ENCODE measurements at regions of chr15 and their contacts with region 1.

Region 1: DNA sequence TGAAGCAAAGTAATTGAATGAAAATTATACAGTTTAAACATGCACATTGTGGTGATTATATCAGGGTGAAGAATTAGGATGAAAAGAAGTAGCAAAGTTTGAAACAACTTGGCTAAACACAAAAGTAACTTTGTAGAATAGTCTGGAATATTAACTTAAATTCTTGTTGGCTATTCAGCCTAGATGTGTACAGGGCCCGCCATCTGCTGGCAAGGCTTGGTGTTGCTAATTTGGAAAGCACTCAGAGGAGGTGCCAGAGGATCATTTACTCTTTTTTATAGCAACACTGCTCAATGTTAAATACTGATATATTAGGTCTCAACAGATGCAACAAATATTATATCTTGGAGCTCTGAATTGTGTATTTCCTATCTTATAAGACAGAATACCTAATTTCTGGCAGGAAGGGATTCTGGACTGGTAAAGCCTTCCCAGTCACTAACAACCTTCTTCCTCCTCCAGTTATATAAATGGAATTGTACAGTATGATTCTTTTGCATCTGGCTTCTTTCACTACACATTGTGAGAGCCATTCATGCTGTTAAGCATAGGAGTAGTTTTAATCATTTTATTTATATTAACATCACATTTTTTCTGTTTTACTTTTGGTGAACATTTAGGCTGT is 36.1 kb downstream of the TTC23 start:
- DNase-seq: peak; percentile 64
- H3K4me3 Mint-ChIP-seq: no peak overlapping the region
- H3K27ac Mint-ChIP-seq: no peak overlapping the region
- H3K4me1 Mint-ChIP-seq: peaks cover 6% of the 10 kb centered on the region
- H3K27me3 Mint-ChIP-seq: no peaks in the 10 kb centered on the region
- CTCF ChIP-seq: peak; percentile 85

Region 2: DNA sequence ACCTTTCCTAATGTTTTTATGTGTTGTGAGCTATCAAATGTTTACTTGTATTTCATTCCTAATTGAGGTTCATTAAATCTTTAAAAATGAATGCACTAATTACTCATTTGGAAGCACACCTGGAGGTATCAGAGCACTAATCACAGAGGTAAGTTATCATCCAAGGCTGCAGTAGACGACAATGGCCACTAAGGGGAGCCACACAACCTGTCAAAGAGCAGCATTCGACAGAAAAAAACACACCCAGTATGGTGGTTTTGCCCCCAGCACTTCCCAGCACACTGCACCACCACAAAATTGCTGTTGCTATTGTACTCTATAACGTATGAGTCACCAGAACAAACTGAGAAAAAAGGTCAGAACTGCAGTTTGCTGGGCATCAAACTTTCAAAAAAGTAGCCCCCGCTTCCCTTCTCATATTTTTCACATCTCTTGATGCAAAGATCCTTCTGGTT is 770.9 kb before region 1 on chr15:
- CTCF ChIA-PET with region 1: interaction called, 4 read pairs
- POLR2A ChIA-PET with region 1: no interaction called
- intact Hi-C with region 1: loop called (anchors 1 kb)
- DNase-seq: peak; percentile 89
- H3K4me3 Mint-ChIP-seq: no peak overlapping the region
- H3K27ac Mint-ChIP-seq: no peak overlapping the region
- H3K4me1 Mint-ChIP-seq: peaks cover 9% of the 10 kb centered on the region
- H3K27me3 Mint-ChIP-seq: peaks cover 22% of the 10 kb centered on the region
- CTCF ChIP-seq: peak; percentile 89

Region 3: GRCh38 chr15:98873441-98874201 is 339.7 kb before region 1 on chr15:
- CTCF ChIA-PET with region 1: no interaction called
- POLR2A ChIA-PET with region 1: no interaction called
- intact Hi-C with region 1: no loop called
- DNase-seq: peak; percentile 97
- H3K4me3 Mint-ChIP-seq: peak overlapping the region; percentile 69
- H3K27ac Mint-ChIP-seq: peak overlapping the region; percentile 80
- H3K4me1 Mint-ChIP-seq: peaks cover 47% of the 10 kb centered on the region
- H3K27me3 Mint-ChIP-seq: no peaks in the 10 kb centered on the region
- CTCF ChIP-seq: no peak

Region 4: DNA sequence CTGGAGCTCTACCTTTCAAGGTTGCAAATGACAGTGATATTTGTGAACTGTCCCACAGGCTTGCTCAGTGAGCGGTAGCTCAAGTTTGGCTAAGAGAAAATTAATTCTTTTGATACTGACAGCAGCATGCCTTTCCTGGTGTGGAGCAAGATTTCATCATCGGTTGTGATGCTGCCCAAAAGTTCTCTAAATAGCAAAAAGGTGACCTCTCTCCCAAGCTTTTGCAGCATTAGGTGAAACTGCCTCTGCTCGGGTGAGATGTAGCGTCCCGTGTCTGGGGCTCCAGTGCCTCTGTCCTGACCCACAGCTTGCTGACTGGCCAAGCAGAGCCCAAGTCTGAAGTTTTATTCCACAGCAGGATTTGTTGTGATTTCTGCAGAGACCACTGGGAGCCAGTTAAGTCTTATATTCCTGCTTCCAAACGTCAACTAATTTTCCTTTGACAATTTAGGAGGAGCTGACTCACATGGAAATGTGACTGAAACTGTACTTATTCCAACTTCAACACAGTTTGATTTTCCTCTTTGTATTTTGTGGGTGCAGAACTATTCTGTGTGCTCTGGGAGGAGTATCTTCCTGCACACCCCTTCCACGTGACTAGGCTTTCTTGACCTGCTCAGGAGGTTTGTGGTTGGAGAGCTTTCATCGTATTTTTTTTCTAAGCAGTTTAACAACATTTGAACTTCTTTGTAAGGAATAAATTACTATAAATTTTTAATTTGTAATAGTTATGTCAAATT is 102.5 kb before region 1 on chr15:
- CTCF ChIA-PET with region 1: interaction called, 11 read pairs
- POLR2A ChIA-PET with region 1: no interaction called
- intact Hi-C with region 1: no loop called
- DNase-seq: no peak
- H3K4me3 Mint-ChIP-seq: no peak overlapping the region
- H3K27ac Mint-ChIP-seq: peak overlapping the region; percentile 40
- H3K4me1 Mint-ChIP-seq: peaks cover 6% of the 10 kb centered on the region
- H3K27me3 Mint-ChIP-seq: no peaks in the 10 kb centered on the region
- CTCF ChIP-seq: no peak

Region 5: DNA sequence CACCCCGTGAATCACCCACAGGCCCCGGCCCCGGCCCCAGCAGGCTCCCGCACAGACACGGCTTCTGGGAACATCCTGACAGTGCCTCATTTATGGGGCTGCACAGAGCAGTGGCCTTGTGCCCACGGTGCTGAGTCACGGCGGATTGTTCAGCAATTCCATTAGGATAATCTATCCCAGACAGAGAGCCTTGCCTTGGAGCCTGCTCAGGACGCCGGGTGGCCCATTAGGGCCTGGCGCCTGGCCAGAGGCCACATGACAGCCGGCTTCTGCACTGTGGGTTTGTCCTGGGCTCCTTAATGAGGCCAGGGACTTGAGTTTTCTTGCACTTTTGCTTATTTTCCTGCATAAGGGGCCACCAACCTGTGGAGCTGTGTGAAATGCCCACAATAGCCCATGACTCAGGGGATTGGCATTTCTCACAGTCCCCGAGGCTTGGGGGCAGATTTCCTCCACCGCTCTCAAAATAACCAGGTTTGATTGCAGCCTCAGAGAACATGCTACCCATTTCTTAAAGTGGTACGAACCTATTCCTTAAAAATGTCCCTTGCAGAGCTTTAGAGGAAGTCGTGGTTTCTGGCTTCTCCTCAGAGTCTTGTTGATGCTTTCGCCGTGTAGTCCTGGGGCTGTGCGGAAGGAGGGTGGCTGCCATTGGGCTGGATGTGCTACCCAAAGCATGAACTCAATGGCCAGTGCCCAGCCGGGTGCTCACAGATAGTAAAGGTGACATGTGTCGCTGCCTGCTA is 89.4 kb before region 1 on chr15:
- CTCF ChIA-PET with region 1: interaction called, 6 read pairs
- POLR2A ChIA-PET with region 1: no interaction called
- intact Hi-C with region 1: loop called (anchors 5 kb)
- DNase-seq: peak; percentile 95
- H3K4me3 Mint-ChIP-seq: peak overlapping the region; percentile 68
- H3K27ac Mint-ChIP-seq: peak overlapping the region; percentile 70
- H3K4me1 Mint-ChIP-seq: peaks cover 19% of the 10 kb centered on the region
- H3K27me3 Mint-ChIP-seq: no peaks in the 10 kb centered on the region
- CTCF ChIP-seq: no peak

Region 6: DNA sequence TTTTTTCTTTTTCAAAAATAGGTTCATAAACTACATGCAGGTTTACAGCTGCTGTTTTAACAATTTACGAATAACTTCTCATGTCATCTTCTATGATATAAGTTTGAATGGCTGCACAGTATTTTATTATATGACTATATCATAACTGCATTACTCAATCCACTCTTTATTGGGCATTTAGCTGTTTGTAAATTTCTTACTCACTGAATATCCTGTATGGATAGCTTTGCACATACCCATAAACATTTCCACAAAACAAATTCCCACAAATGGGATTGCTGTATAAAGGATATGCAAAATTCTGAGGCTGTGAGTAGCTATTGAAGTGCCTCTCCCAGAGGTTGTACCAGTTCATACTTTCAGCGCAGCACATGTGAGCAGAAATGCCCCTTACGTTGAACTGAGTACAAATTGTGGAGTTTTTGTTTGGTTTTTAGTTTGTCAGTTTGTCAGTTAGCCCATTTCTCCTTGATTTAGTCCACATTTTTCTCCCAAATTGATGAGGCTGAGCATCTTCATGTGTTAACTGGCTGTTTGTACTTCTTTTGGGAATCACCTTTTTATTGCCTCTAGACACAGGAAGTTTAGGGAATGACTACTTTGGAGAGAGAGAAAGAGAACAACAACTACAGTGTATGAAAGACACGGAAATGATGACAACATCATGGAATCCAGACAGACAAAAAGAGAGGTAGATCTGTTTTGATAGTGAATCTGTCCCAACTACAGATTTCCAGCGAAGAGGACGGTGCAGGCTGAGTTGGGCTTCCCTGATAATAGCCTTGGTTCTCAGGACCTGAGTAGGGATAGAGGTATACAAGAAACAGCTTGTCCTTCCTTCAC is 11.3 kb after region 1 on chr15:
- CTCF ChIA-PET with region 1: interaction called, 31 read pairs
- POLR2A ChIA-PET with region 1: no interaction called
- intact Hi-C with region 1: no loop called
- DNase-seq: no peak
- H3K4me3 Mint-ChIP-seq: no peak overlapping the region
- H3K27ac Mint-ChIP-seq: no peak overlapping the region
- H3K4me1 Mint-ChIP-seq: peaks cover 6% of the 10 kb centered on the region
- H3K27me3 Mint-ChIP-seq: no peaks in the 10 kb centered on the region
- CTCF ChIP-seq: no peak

Measured in MCF 10A (cell line).